WTC11 (cell line): ENCODE measurements at regions of chrX and their contacts with region 1.

Region 1: GRCh38 chrX:64792598-64793337 is 183.5 kb downstream of the ZC4H2 start:
- DNase-seq: peak; percentile 16
- ATAC-seq: peak; percentile 82
- H3K4me3 Mint-ChIP-seq: no peak overlapping the region
- H3K27ac Mint-ChIP-seq: no peak overlapping the region
- H3K4me1 Mint-ChIP-seq: no peaks in the 10 kb centered on the region
- H3K27me3 Mint-ChIP-seq: no peaks in the 10 kb centered on the region
- CTCF ChIP-seq: no peak

Region 2: DNA sequence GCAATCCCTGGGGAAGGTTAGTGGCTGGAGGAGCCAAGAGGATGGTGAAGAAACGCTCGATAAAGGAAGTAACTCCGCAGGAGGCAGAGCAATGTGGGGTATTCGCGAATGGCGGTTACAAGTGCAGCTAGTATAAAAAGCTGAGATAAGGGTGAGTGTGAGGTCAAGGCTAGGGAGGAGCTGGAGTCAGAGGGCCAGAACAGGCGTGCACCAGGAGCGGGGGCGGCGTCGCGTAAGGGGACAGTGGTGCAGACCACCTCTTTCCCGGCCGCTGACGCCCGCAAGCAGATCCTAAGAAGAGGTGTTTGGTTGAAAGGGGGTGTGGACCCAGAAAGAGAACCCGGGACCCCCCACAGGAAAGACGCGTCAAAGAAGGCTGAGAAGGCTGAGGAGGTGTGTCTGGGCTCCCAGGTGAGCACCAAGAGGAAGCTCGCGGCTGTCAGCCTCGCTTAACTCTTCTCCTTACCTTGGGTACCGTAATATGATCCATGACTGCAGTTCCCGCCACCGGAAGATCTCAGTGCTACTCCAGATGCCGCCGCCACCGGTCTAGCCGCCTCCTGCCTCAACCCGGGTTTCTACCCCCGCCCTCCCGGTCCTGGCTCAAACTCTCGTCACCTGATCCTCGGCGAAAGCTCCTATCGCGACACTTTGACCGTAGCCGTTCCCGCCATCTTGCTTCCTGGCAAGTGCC is 397.7 kb before region 1 on chrX and contains the start of gene MTMR8:
- CTCF ChIA-PET with region 1: no interaction called
- POLR2A ChIA-PET with region 1: no interaction called
- DNase-seq: peak; percentile 82
- ATAC-seq: peak; percentile 96
- H3K4me3 Mint-ChIP-seq: peak within 1 kb of the TSS; percentile 89
- H3K27ac Mint-ChIP-seq: peak within 1 kb of the TSS; percentile 88
- H3K4me1 Mint-ChIP-seq: peaks cover 18% of the 10 kb centered on the region
- H3K27me3 Mint-ChIP-seq: no peaks in the 10 kb centered on the region; the same call in 1 of the 2 replicates
- CTCF ChIP-seq: no peak
- total RNA-seq, gene MTMR8: 3.8 to 7.1 TPM (median 6.1 TPM) in 3 replicates

Region 3: DNA sequence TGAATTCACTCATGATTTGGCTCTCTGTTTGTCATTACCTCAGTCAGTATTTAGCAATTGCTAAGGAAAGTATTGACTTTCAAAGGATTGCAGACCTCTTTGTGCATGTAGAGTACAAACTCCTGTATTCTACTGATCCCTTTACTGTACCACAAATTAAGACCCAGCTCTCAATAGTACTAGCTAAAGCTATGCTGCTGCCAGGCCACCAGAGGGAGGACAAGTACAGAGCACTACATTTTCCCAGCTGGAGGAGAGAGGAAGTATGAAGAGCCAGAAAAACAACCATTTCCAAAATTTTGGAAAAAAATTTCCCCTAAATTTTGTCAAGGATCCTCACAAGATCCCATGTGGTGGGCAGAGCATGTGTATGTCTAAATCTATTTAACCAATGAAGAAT is 222.6 kb before region 1 on chrX:
- CTCF ChIA-PET with region 1: interaction called, 11 read pairs
- POLR2A ChIA-PET with region 1: no interaction called
- DNase-seq: peak; percentile 12
- ATAC-seq: peak; percentile 84
- H3K4me3 Mint-ChIP-seq: no peak overlapping the region
- H3K27ac Mint-ChIP-seq: peak overlapping the region; percentile 48; the same call in 1 of the 2 replicates
- H3K4me1 Mint-ChIP-seq: peaks cover 20% of the 10 kb centered on the region
- H3K27me3 Mint-ChIP-seq: no peaks in the 10 kb centered on the region; the same call in 1 of the 2 replicates
- CTCF ChIP-seq: no peak; the same call in 1 of the 2 replicates

Region 4: GRCh38 chrX:64805683-64806082 is 12.9 kb after region 1 on chrX:
- CTCF ChIA-PET with region 1: no interaction called
- POLR2A ChIA-PET with region 1: no interaction called
- DNase-seq: no peak
- ATAC-seq: no peak
- H3K4me3 Mint-ChIP-seq: no peak overlapping the region
- H3K27ac Mint-ChIP-seq: no peak overlapping the region
- H3K4me1 Mint-ChIP-seq: no peaks in the 10 kb centered on the region
- H3K27me3 Mint-ChIP-seq: peaks cover 15% of the 10 kb centered on the region
- CTCF ChIP-seq: no peak